ENCODE measurements at regions of chr5 and their contacts with region 1.

Region 1: DNA sequence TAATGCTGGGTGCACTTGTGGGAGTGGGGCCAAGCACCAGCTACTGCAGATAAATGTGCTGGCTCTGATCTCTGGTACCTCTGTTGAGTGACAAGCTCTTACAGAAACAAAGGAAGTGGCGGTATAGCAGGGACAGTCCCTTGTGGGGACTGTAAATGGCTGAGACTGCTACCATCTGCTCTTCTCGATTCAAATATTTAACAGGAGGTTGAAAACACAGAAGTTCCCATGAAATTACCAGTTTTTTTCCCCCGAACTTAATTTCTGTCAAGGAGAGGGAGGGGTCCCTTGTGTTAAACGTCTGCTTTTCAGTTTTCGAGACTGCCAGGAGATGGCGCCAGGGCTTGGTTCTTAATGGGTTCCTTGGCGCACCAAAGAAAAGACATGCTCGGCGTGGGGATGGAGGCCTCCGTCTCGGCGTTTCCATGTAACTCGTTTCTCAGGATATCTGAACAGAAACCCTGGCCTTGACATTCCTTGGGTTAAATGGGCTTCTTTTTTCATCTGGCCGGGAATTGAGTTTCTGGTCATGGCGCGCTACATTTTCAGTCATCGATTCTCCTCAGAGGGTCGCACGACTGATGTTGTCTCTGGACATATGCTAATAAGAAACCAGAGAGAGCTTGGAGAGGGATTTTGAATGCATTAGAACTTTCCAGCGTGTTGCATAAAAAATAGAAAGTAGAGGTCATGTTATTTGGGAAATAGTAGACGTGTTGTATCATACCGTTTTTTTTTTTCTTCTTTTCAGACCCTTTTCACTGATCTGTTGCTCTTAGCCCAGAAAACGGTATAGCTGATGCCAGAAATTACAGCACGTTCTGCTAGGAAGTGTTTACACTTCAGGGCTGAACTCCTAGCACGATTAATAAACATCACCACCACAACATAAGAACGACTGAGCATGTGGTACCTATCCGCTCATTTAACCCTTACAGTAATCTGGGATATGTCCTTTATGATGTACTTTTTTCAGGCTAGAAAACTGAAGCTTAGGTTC is 64.0 kb downstream of the CARTPT start:
- DNase-seq: peak; percentile 82 to 91
- H3K4me3 ChIP-seq: peak overlapping the region; percentile 39 to 40
- H3K27ac ChIP-seq: peak overlapping the region; percentile 63 to 75
- H3K4me1 ChIP-seq: peaks cover 0 to 16% (median 11%) of the 10 kb centered on the region in 4 donors
- H3K27me3 ChIP-seq: no peaks in the 10 kb centered on the region
- CTCF ChIP-seq: peak; percentile 89 to 91

Region 2: DNA sequence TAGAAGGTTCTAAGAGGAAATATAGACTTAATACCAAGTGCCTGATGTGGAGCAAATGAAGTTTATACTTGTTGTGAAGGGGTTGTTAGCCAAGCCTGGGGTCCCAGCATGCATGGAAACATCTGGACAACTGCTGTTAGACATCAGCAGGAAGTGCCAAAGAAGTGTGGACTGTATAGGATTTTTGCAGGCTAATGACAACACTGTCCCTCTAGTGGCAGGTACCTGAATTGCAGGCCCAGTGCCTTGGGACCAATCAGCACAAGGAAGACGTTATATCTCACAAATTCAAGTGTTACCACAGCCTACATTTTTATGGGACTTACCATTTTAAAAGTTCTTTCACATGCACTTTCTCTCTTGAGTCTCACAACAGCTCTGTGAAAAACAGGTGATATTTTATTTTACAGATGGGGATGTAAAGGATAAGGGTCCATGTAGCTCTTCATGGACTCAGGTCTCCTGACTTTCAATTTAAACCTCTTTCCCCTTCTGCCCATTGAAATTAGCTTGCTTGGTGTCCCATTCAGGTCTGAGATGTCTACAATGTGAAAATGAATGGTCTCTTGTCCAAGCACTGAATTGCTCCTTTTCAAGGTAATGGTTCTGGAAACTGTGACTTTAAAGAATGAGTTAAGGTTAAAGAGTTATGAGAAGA is 235.2 kb after region 1 on chr5:
- intact Hi-C with region 1: loop called (anchors 5 kb)
- DNase-seq: peak; percentile 51 to 70
- H3K4me3 ChIP-seq: no peak overlapping the region
- H3K27ac ChIP-seq: no peak overlapping the region
- H3K4me1 ChIP-seq: no peaks in the 10 kb centered on the region
- H3K27me3 ChIP-seq: no peaks in the 10 kb centered on the region
- CTCF ChIP-seq: peak; percentile 76 to 89

Region 3: GRCh38 chr5:72079296-72079695 is 296.2 kb after region 1 on chr5:
- intact Hi-C with region 1: no loop called
- DNase-seq: no peak
- H3K4me3 ChIP-seq: no peak overlapping the region
- H3K27ac ChIP-seq: no peak overlapping the region
- H3K4me1 ChIP-seq: peaks cover 0 to 8% (median under 1%) of the 10 kb centered on the region in 4 donors
- H3K27me3 ChIP-seq: no peaks in the 10 kb centered on the region
- CTCF ChIP-seq: no peak

Region 4: DNA sequence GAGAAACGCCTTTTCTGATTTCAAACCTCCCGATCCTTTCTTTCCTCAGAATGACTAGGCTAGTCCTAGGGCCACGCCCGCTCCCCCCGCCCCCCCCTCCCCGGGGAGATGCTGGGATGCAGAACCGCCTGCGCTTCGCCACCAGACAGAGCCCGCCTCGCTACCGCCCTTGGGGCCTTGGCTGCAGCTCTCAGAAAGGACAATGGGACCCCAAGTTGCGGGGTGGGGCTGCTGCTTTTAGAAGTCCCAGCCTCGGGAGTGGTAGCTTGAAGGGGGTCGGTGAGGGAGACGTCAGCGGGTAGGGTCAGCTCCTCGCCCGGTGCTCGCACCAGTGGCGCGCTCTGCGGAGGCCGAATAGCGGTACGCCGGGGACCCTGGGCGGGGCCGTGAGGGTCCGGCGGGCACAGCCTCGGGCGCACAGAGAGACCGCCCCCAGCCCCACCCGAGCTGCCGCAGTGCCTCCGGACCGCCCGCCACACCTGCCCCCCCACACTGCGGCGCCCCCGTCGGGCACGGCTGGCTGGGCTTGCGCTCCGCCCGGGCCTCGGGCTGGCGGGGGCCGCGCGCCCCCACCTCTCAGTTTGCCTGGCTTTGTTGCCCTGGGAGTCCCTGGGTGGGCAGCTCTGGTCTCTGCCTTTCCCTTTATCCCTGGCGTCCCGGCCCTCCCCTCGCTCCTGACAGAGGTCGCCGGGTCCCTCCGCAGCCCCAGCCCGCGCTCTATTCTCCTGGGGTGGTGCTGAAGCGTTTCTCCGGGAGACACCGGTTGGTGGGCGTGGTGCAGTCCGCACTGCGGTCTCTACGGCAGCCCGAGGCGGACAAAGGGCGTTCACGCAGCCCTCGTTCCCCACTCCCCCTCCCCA is 325.4 kb after region 1 on chr5:
- intact Hi-C with region 1: loop called (anchors 10 kb)
- DNase-seq: peak; percentile 86 to 96
- H3K4me3 ChIP-seq: peak overlapping the region; percentile 91 to 96
- H3K27ac ChIP-seq: peak overlapping the region; percentile 96 to 99
- H3K4me1 ChIP-seq: peaks cover 0 to 55% (median 21%) of the 10 kb centered on the region in 4 donors
- H3K27me3 ChIP-seq: no peaks in the 10 kb centered on the region
- CTCF ChIP-seq: no peak

Region 5: DNA sequence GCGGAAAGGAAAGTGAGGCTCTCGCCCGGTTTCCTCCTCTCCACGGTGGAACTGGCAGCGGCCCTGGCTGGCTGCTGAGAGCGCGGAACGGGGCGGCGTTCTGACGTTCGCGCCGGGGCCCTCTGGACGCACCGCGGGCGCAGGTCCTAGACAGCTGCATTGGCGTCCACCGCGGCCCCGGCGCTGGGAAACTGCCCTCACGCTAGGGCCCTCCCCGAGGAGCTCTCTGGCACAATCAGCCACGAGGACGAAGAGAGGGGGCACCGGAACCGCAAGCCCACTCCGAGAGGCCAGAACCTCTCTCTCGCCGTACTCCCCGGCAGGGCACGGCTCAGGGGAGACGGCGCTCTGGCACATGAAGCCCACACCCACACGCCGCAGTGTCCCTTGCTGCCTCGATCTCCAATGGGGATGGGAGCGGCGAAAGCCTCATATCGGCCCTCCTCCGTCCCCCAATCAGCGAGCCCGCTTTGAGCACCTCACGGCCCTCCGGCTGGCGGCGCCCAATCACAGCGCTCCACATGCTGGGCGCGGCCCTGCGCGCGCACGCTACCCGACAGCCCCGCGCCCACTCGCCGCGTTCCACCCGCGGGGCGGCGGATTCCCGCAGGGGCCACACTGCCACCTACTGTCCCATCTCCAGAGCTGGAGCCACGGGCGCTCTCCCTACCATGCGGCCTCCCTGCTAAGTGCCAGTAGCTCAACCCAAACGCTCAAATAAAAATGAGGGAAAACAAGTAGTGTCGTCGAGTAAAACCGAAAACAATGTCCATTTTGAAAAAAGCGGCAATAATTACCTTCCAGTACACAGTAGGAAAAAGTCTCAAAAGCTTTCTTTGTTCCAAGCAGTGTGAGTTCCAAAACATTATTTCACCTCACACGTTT is 525.1 kb after region 1 on chr5:
- intact Hi-C with region 1: loop called (anchors 2 kb)
- DNase-seq: peak; percentile 97 to 99
- H3K4me3 ChIP-seq: peak overlapping the region; percentile 66 to 72
- H3K27ac ChIP-seq: peak overlapping the region; percentile 95
- H3K4me1 ChIP-seq: peaks cover 0 to 40% (median 8%) of the 10 kb centered on the region in 4 donors
- H3K27me3 ChIP-seq: no peaks in the 10 kb centered on the region
- CTCF ChIP-seq: peak; percentile 89 to 93